ENCODE measurements at regions of chr2 and their contacts with region 1.

Region 1: DNA sequence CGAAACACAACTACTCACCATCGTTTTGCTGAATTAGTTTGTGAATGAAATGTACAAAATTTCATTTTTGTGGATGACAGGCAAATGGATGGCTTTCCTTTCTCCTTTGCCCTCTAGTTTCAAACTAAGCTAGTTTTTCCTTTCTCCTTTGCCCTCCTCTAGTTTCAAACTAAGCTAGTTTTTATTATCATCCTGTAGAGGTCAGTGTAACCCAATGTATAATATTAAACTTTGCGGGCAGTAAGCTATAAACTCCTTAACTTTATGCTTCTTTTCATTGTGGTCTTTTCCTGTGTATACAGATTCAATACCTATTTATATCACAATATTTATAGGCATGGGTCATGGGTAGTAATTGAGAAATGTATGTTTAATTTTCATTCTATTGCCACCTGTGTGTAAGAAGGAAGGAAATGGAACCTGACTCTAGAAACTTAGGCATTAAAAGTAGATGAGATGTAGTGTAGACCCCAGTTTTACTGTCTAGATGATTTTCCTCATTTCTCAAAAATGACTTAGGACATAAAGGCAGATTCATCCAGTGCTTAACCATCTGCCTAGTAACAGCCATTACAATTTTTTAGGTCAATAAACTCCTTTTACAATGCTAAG is 58.1 kb downstream of the MAP3K19 start:
- DNase-seq: no peak
- H3K4me3 ChIP-seq: no peak overlapping the region
- H3K27ac ChIP-seq: no peak overlapping the region
- H3K4me1 ChIP-seq: no peaks in the 10 kb centered on the region
- H3K27me3 ChIP-seq: no peaks in the 10 kb centered on the region
- CTCF ChIP-seq: peak in 4 of 5 experiments; percentile 29 to 39 (median 32)
- EP300 ChIP-seq: no peak
- POLR2A ChIP-seq: no peak

Region 2: DNA sequence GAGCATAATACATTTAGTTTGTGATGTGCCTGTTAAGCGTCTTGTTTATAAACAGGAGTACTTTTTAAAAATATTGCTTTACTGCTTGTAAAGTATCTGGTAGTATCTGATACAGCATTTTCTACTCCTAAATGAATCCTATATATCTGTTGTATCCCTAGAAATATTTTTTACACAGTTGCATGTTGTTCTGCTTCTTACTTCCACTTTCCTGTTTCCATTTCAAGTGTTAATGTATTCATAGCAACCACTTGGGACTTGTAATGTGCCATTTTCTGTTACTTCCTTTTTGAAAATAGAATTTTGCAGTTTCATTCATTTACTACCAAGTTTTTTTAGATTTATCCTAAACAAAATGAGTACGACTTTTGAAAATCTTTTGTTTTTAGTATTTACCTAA is 45.6 kb before region 1 on chr2:
- in situ Hi-C with region 1: no loop called
- intact Hi-C with region 1: no loop called
- DNase-seq: no peak
- H3K4me3 ChIP-seq: no peak overlapping the region
- H3K27ac ChIP-seq: no peak overlapping the region
- H3K4me1 ChIP-seq: no peaks in the 10 kb centered on the region
- H3K27me3 ChIP-seq: no peaks in the 10 kb centered on the region
- CTCF ChIP-seq: no peak
- EP300 ChIP-seq: no peak
- POLR2A ChIP-seq: no peak

Region 3: GRCh38 chr2:135709992-135710391 is 720.9 kb after region 1 on chr2:
- in situ Hi-C with region 1: loop called in 1 of 4 experiments (anchors 25 kb)
- intact Hi-C with region 1: no loop called
- DNase-seq: peak; percentile 56
- H3K4me3 ChIP-seq: no peak overlapping the region
- H3K27ac ChIP-seq: no peak overlapping the region
- H3K4me1 ChIP-seq: no peaks in the 10 kb centered on the region
- H3K27me3 ChIP-seq: no peaks in the 10 kb centered on the region
- CTCF ChIP-seq: peak; percentile 88 to 96 (median 95)
- EP300 ChIP-seq: no peak
- POLR2A ChIP-seq: no peak

Measured in transverse colon (tissue), 4 donors.